ENCODE measurements at regions of chr12 and their contacts with region 1.

Region 1: DNA sequence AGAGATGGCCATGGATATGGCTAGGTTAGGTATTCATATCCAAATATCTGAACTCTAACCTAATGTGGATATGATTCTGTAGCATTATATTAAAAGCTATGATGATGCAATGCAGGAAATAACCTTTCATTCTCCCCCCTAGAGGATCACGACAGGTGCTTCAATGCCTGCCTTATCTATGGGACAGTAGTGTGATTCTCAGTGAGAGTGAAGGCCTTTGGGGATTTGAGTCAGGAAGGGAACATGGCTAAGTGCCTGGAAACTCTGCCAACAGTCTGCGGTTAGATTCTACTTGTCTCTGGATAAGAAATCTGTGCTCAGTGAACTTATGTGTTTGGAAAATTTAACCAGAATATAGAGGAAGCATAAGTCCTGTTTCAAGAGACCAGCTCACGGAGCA is 81.8 kb downstream of the SLC38A1 start:
- DNase-seq: no peak
- H3K4me3 ChIP-seq: no peak overlapping the region
- H3K27ac ChIP-seq: no peak overlapping the region
- H3K4me1 ChIP-seq: no peaks in the 10 kb centered on the region
- H3K27me3 ChIP-seq: no peaks in the 10 kb centered on the region
- CTCF ChIP-seq: no peak
- POLR2A ChIP-seq: no peak

Region 2: DNA sequence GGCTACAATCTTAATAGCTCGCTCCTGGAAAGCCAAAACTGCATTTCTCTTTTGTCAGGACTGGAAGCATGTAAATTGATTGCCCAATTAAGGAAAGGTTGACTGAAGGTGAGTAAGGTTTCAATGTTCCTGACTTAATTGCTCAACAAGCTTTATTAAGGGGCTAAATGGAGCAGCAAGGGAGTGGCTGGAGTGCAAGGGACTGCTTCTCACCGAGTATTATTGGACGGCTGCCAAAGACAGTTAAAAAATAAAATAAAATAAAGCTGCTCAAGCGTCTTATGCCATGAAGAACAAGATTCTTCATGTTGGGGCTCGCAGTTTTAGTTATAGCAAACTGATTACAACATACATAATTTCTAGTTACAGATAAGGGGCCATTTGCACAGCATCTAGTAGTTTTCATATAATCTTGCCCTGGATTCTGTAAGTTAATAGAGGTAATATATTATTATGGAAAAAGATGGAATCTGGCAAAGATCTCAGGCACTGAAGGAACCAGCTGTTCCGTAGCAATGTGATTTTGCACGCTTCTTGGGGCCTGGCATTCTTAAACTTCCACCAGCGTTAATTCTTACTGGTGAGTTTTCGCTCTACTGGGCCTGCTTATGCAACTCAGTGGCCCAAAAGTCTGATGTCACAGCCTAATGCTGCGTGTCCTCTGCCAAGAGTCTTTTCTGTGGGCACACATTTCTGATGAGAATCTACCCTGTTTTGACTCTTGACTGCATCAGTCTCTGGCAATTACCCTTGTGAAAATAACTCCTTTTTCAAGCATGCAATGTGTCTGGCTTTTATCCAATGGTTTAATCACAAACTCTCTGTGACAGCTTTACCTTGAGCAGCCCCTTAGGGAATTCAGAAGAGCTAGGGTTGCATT is 26.7 kb before region 1 on chr12:
- CTCF ChIA-PET with region 1: no interaction called
- POLR2A ChIA-PET with region 1: no interaction called
- dilution Hi-C with region 1: no loop called
- intact Hi-C with region 1: no loop called
- DNase-seq: no peak
- H3K4me3 ChIP-seq: no peak overlapping the region
- H3K27ac ChIP-seq: no peak overlapping the region
- H3K4me1 ChIP-seq: no peaks in the 10 kb centered on the region
- H3K27me3 ChIP-seq: no peaks in the 10 kb centered on the region
- CTCF ChIP-seq: no peak
- POLR2A ChIP-seq: no peak

Region 3: DNA sequence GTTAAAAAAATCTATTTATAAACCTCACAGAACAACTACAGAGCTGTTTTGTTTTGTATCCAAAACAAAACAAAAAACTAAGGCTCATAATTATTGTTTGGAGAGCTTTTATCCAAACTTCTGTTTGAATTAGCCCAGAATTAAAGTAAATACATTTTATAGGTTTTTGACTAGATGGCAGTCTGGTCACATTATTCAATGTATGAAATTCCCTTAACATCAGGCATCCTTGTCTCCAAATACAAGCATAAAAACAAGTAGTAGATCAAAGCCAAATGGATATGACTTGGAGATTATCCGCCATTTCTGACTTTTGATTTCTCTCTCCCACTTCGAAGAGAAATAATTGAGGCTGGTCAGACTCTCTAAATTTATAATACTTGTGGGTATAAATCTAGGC is 18.3 kb after region 1 on chr12:
- CTCF ChIA-PET with region 1: interaction called, 3 read pairs
- POLR2A ChIA-PET with region 1: no interaction called
- dilution Hi-C with region 1: no loop called
- intact Hi-C with region 1: loop called (anchors 1 kb)
- DNase-seq: peak; percentile 16
- H3K4me3 ChIP-seq: no peak overlapping the region
- H3K27ac ChIP-seq: no peak overlapping the region
- H3K4me1 ChIP-seq: peaks cover 12% of the 10 kb centered on the region
- H3K27me3 ChIP-seq: no peaks in the 10 kb centered on the region
- CTCF ChIP-seq: no peak
- POLR2A ChIP-seq: no peak

Region 4: DNA sequence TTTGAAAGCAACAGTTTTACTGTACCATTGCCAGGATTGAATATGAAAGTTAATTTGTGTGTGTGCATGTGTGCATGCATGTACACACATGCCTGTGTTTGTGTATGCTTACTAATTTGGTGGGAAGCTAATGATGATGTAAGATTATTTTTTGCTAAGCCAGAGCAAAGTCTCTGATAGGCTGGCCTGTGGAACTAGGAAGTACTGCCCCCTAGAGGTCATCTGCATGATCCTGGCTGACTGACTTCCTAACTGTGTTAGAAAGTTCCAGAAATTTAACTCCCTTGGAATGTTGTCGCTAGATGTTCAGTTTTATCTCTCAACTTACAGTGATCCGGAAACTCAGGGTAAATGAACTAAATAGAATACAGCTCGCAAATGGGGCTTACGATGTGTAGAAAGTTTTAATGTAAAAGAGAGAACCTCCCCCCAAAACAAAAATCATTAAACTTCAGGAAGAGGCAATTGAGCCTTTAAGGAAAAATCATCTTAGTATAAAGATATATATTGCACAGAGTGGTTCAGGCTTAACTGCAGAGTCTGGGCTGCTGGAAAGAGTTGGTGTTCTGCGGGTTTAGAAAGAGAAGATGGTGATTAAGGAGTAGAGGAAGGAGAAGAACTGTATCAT is 116.1 kb after region 1 on chr12:
- CTCF ChIA-PET with region 1: no interaction called
- POLR2A ChIA-PET with region 1: no interaction called
- dilution Hi-C with region 1: no loop called
- intact Hi-C with region 1: no loop called
- DNase-seq: peak; percentile 35
- H3K4me3 ChIP-seq: no peak overlapping the region
- H3K27ac ChIP-seq: no peak overlapping the region
- H3K4me1 ChIP-seq: no peaks in the 10 kb centered on the region
- H3K27me3 ChIP-seq: peaks cover 3 to 12% of the 10 kb centered on the region in 2 experiments
- CTCF ChIP-seq: peak; percentile 54 to 58
- POLR2A ChIP-seq: no peak